Transverse colon (tissue), 4 donors: ENCODE measurements at regions of chr1 and their contacts with region 1.

Region 1: GRCh38 chr1:45303582-45304310 is 22.9 kb upstream of the HPDL start:
- DNase-seq: peak; percentile 99
- H3K4me3 ChIP-seq: peak overlapping the region; percentile 52 to 94 (median 70)
- H3K27ac ChIP-seq: peak overlapping the region; percentile 85 to 98 (median 92)
- H3K4me1 ChIP-seq: peaks cover 8 to 16% (median 10%) of the 10 kb centered on the region in 4 donors
- H3K27me3 ChIP-seq: no peaks in the 10 kb centered on the region
- CTCF ChIP-seq: peak; percentile 58 to 93 (median 75)
- EP300 ChIP-seq: no peak
- POLR2A ChIP-seq: peak; percentile 86

Region 2: GRCh38 chr1:44775078-44775929 is 528.4 kb before region 1 on chr1 and contains the start of gene RPS8:
- in situ Hi-C with region 1: loop called in 2 of 4 experiments (anchors 25 kb)
- intact Hi-C with region 1: loop called (anchors 5 kb)
- DNase-seq: peak; percentile 95
- H3K4me3 ChIP-seq: peak within 1 kb of the TSS; percentile 72 to 81 (median 78)
- H3K27ac ChIP-seq: peak within 1 kb of the TSS; percentile 92 to 97 (median 95)
- H3K4me1 ChIP-seq: peaks cover 9 to 29% (median 21%) of the 10 kb centered on the region in 4 donors
- H3K27me3 ChIP-seq: no peaks in the 10 kb centered on the region
- CTCF ChIP-seq: no peak
- EP300 ChIP-seq: no peak
- POLR2A ChIP-seq: peak; percentile 97
- total RNA-seq, gene RPS8: 505 to 1,630 (median 1,282) TPM

Region 3: GRCh38 chr1:44799770-44800584 is 503.8 kb before region 1 on chr1 and contains the start of gene PLK3:
- in situ Hi-C with region 1: loop called in 2 of 4 experiments (anchors 25 kb)
- intact Hi-C with region 1: no loop called
- DNase-seq: peak; percentile 99
- H3K4me3 ChIP-seq: peak within 1 kb of the TSS; percentile 58 to 91 (median 75)
- H3K27ac ChIP-seq: peak within 1 kb of the TSS; percentile 90 to 96 (median 94)
- H3K4me1 ChIP-seq: peaks cover 6 to 26% (median 16%) of the 10 kb centered on the region in 4 donors
- H3K27me3 ChIP-seq: no peaks in the 10 kb centered on the region
- CTCF ChIP-seq: peak; percentile 84 to 97 (median 92)
- EP300 ChIP-seq: peak; percentile 29
- POLR2A ChIP-seq: peak; percentile 92
- total RNA-seq, gene PLK3: 12.4 to 87.2 (median 16.3) TPM

Region 4: GRCh38 chr1:44835738-44836675 is 467.7 kb before region 1 on chr1:
- in situ Hi-C with region 1: loop called in 1 of 4 experiments (anchors 25 kb)
- intact Hi-C with region 1: no loop called
- DNase-seq: peak; percentile 90
- H3K4me3 ChIP-seq: no peak overlapping the region
- H3K27ac ChIP-seq: no peak overlapping the region
- H3K4me1 ChIP-seq: peaks cover 0 to 6% (median 2%) of the 10 kb centered on the region in 4 donors
- H3K27me3 ChIP-seq: no peaks in the 10 kb centered on the region
- CTCF ChIP-seq: peak; percentile 76 to 85 (median 81)
- EP300 ChIP-seq: no peak
- POLR2A ChIP-seq: no peak

Region 5: DNA sequence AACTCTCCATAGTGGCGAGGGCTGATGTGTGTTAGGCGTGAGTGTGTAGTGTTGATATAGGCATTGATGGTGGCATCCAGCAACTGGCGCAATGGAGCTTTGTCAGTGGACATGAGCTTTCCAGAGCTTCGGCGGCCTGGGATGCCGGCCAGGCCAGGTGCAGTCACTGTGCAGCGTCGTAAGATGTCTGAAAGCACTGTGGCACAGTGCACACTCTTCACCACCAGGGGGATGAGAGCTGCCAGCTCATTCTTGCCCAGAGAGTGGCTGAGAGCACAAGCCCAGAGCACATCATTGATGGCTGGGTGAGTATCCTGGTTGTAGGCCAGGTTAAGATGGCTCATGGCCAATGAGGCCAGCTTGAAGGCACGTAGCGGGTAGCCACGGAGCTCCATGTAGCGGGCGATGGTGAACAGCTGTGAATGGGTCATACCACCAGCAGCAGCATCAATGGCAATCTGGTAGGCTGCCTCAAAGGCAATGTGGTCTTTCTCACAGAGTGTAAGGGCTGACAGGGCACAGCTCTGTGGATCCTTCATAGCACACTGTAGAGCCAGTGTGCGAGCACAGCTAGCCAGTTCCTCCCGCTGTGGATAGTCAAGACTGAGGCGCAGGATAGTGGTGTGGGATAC is 285.0 kb before region 1 on chr1:
- in situ Hi-C with region 1: loop called (anchors 5 to 10 kb)
- intact Hi-C with region 1: loop called (anchors 1 kb)
- DNase-seq: peak; percentile 74
- H3K4me3 ChIP-seq: no peak overlapping the region
- H3K27ac ChIP-seq: no peak overlapping the region
- H3K4me1 ChIP-seq: peaks cover 0 to 6% (median 2%) of the 10 kb centered on the region in 4 donors
- H3K27me3 ChIP-seq: no peaks in the 10 kb centered on the region
- CTCF ChIP-seq: peak; percentile 59 to 86 (median 79)
- EP300 ChIP-seq: no peak
- POLR2A ChIP-seq: no peak

Region 6: GRCh38 chr1:45172024-45172423 is 131.7 kb before region 1 on chr1:
- in situ Hi-C with region 1: no loop called
- intact Hi-C with region 1: no loop called
- DNase-seq: no peak
- H3K4me3 ChIP-seq: no peak overlapping the region
- H3K27ac ChIP-seq: no peak overlapping the region
- H3K4me1 ChIP-seq: peaks cover 0 to 18% (median 3%) of the 10 kb centered on the region in 4 donors
- H3K27me3 ChIP-seq: no peaks in the 10 kb centered on the region
- CTCF ChIP-seq: no peak
- EP300 ChIP-seq: no peak
- POLR2A ChIP-seq: no peak

Region 7: GRCh38 chr1:45365051-45365450 is 61.3 kb after region 1 on chr1:
- in situ Hi-C with region 1: no loop called
- intact Hi-C with region 1: no loop called
- DNase-seq: no peak
- H3K4me3 ChIP-seq: no peak overlapping the region
- H3K27ac ChIP-seq: no peak overlapping the region
- H3K4me1 ChIP-seq: peaks cover 9 to 18% (median 15%) of the 10 kb centered on the region in 4 donors
- H3K27me3 ChIP-seq: no peaks in the 10 kb centered on the region
- CTCF ChIP-seq: no peak
- EP300 ChIP-seq: no peak
- POLR2A ChIP-seq: no peak

Region 8: DNA sequence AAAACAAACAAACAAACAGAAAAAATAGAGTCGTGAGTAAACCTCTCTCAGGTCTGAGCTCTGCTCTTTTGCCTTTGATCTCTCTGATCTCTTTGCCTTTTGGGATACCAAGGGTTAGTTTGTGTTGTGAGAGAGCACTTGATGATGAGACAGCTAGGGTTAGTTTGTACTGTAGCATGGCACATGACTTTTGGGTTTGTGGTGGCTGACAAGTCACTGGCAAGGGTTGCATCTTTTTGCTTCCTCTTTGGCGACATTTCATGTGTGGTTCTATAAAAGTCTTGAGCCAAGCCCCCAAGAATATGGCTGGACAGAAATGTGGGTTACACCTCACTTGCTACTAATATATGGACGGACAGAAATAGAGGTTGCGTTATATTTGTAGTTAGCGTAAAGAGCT is 126.7 kb after region 1 on chr1:
- in situ Hi-C with region 1: no loop called
- intact Hi-C with region 1: no loop called
- DNase-seq: no peak
- H3K4me3 ChIP-seq: no peak overlapping the region
- H3K27ac ChIP-seq: no peak overlapping the region
- H3K4me1 ChIP-seq: no peaks in the 10 kb centered on the region
- H3K27me3 ChIP-seq: no peaks in the 10 kb centered on the region
- CTCF ChIP-seq: no peak
- EP300 ChIP-seq: no peak
- POLR2A ChIP-seq: no peak

Region 9: DNA sequence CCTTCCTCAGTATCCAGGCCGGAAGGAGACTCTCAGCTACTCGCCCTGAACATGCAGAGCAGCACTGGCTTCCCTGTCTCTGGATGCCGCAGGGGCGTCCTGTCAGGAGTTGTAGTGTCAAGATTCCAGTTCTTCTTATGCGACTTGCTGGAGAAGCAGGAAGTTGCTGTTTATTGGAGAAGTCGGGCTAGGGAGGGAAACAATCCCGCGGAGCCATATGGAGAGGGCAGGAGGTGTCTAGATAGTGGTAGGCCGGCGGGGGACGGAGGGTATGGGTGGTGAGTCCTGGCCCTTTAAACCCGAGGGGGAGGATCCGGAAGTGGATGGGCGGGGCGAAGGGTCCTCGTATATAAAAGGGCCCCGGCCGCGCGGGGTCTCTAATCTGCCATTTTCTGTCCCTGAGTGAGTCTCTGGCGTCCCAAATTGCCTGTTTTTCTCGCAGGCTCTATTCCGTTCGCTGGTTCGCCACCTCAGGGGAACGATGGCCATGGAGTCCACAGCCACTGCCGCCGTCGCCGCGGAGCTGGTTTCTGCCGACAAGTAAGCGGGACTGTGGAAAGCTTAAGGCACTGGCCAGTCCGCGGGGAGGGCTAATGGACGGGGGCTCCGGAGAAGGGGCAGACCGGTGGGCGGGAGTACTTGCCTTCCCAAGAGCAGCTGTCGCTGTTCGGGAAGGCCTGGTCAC is 280.1 kb after region 1 on chr1 and contains the start of gene NASP:
- in situ Hi-C with region 1: no loop called
- intact Hi-C with region 1: no loop called
- DNase-seq: peak; percentile 92
- H3K4me3 ChIP-seq: peak within 1 kb of the TSS; percentile 79 to 100 (median 84)
- H3K27ac ChIP-seq: peak within 1 kb of the TSS; percentile 93 to 100 (median 96)
- H3K4me1 ChIP-seq: peaks cover 9 to 29% (median 17%) of the 10 kb centered on the region in 4 donors
- H3K27me3 ChIP-seq: no peaks in the 10 kb centered on the region
- CTCF ChIP-seq: no peak
- EP300 ChIP-seq: no peak
- POLR2A ChIP-seq: peak; percentile 90
- total RNA-seq, gene NASP: 34.4 to 62.2 (median 37.5) TPM